Dorsolateral prefrontal cortex (tissue), 120 donors: ENCODE measurements at regions of chr4 and their contacts with region 1.

Region 1: GRCh38 chr4:158253350-158253980 is 43.2 kb downstream of the TMEM144 start:
- DNase-seq: peak in 3 of 10 donors; percentile 45 to 69 (median 46)
- H3K4me3 ChIP-seq: peak overlapping the region in 4 of 59 donors; percentile 19 to 38 (median 20)
- H3K27ac ChIP-seq: peak overlapping the region in 58 of 59 donors; percentile 44 to 100 (median 82)
- H3K27me3 ChIP-seq: no peaks in the 10 kb centered on the region
- CTCF ChIP-seq: peak; percentile 42 to 93 (median 78)

Region 2: GRCh38 chr4:158172261-158173258 is 80.9 kb before region 1 on chr4 and contains the start of gene GASK1B:
- intact Hi-C with region 1: loop called in 1 of 2 experiments (anchors 5 kb)
- DNase-seq: peak in 2 of 10 donors; percentile 33 to 61
- H3K4me3 ChIP-seq: peak within 1 kb of the TSS; percentile 30 to 70 (median 53)
- H3K27ac ChIP-seq: peak within 1 kb of the TSS in 57 of 59 donors; percentile 6 to 88 (median 76)
- H3K27me3 ChIP-seq: no peaks in the 10 kb centered on the region
- CTCF ChIP-seq: peak; percentile 57 to 94 (median 77)
- total RNA-seq, gene GASK1B: 23.9 to 74.1 (median 43.0) TPM

Region 3: GRCh38 chr4:158461336-158461735 is 207.9 kb after region 1 on chr4:
- intact Hi-C with region 1: no loop called
- DNase-seq: no peak
- H3K4me3 ChIP-seq: no peak overlapping the region
- H3K27ac ChIP-seq: no peak overlapping the region
- H3K27me3 ChIP-seq: no peaks in the 10 kb centered on the region
- CTCF ChIP-seq: no peak